ENCODE measurements at regions of chr6 and their contacts with region 1.

Region 1: GRCh38 chr6:32413427-32414047 is 6.6 kb upstream of the BTNL2 start:
- DNase-seq: peak; percentile 38
- H3K4me3 ChIP-seq: no peak overlapping the region
- CTCF ChIP-seq: peak; percentile 97

Region 2: DNA sequence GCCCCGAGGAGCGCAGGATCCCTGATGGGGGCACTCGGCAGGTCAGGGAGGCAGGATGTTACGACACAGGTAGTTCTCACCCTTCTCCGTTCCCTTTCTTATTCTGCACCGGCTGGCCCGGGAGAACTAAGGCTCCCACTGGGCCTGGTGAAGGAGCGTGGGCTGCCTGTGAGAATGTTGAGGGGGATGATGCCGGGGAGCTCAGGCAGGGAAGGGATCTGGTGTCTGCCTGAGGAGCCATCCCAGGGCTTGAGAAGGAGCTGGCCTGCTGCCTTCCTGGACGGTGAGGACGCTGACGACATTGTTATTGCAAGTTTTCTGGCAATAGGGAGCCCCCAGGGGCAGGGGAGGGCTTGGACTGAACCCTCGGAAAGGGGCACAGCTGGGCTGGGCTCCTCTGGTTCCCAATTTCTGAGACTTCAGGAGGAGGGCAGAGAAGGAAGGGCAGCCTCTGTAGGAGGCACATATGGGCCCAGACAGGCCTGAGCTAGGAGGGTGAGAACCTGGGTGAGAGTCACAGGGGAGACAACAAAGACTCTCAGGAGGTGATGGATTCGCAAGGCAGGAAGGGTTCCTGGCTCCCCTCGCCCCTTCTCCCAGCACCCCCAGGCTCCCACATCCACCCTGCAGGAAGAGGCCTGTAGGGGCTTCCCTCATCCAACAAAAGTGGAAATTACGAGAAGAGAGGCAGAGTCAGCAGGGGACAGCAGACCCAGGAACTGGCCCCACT is 342.6 kb before region 1 on chr6:
- CTCF ChIA-PET with region 1: no interaction called
- POLR2A ChIA-PET with region 1: no interaction called
- DNase-seq: no peak
- H3K4me3 ChIP-seq: no peak overlapping the region
- CTCF ChIP-seq: no peak

Region 3: GRCh38 chr6:32244946-32245398 is 168.6 kb before region 1 on chr6:
- CTCF ChIA-PET with region 1: interaction called, 19 read pairs
- POLR2A ChIA-PET with region 1: no interaction called
- DNase-seq: no peak
- H3K4me3 ChIP-seq: no peak overlapping the region
- CTCF ChIP-seq: peak; percentile 85

Region 4: GRCh38 chr6:32298663-32299267 is 114.8 kb before region 1 on chr6:
- CTCF ChIA-PET with region 1: no interaction called
- POLR2A ChIA-PET with region 1: no interaction called
- DNase-seq: no peak
- H3K4me3 ChIP-seq: no peak overlapping the region
- CTCF ChIP-seq: no peak

Region 5: DNA sequence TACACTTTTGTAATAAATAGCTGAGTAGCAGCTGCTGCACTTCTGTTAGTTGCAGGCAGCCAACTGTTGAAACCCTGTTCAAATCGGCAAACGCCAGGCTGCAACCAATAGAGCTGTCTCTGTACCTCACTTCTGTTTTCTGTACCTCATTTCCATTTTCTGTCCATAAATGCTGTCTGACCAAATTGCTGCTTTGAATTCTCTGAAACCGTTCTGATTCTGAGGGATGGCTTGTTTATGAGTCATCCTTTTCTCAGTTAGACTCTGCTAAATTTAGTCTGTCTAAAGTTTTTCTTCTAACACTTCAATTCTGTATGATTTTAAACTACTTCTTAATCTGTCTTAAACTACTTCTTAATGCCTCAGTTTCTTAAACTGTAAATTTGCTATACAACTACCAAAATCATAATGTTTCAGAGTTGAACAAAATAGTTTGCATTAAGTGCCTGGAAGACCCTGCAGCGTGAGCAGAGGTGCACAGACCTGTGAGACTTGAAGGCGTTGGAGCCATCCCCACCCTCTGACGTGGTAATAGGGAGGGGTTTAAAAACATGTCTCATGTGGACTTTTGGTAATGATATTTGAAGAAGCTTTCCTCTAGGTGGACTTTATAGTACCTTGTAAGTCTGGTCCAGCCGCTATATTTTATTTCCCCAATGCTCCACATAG is 16.2 kb before region 1 on chr6:
- CTCF ChIA-PET with region 1: interaction called, 88 read pairs
- POLR2A ChIA-PET with region 1: no interaction called
- DNase-seq: no peak
- H3K4me3 ChIP-seq: no peak overlapping the region
- CTCF ChIP-seq: no peak

Region 6: DNA sequence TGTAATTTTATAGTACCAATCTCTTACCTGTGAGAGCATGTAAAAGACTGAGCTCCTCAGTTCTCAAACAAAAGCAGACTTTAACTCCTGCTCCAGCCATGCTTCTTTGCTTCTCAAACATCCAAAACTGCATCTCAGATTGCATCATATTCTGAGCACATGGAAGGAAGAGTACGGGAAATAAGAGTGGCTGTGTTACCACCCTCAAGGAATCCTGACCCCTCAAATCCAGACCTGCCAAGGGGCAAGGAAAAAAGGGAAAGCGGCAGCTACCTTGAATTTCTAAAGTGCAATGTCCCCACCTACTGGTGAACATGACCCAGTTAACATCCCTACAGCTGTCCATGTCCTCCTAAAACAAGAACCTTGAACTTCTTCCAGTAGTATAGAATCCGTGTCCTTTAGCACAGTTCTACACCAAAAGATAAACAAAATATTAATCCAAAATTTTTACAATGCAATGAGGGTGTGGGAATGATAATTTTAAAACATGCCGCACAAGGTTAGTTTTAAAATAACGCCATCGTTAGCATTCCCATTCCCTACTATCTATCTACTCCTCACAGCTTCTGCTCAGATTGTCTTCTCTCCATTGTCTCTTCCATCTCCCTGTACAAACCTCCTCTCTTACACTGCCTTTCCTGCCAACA is 287.0 kb after region 1 on chr6:
- CTCF ChIA-PET with region 1: interaction called, 95 read pairs
- POLR2A ChIA-PET with region 1: no interaction called
- DNase-seq: no peak
- H3K4me3 ChIP-seq: no peak overlapping the region
- CTCF ChIP-seq: peak; percentile 57

Region 7: GRCh38 chr6:32796848-32797776 is 383.6 kb after region 1 on chr6:
- CTCF ChIA-PET with region 1: interaction called, 69 read pairs
- POLR2A ChIA-PET with region 1: no interaction called
- DNase-seq: no peak
- H3K4me3 ChIP-seq: peak overlapping the region; percentile 49
- CTCF ChIP-seq: peak; percentile 69

Measured in AG04449 (cell line).